ENCODE measurements at regions of chr7 and their contacts with region 1.

Region 1: DNA sequence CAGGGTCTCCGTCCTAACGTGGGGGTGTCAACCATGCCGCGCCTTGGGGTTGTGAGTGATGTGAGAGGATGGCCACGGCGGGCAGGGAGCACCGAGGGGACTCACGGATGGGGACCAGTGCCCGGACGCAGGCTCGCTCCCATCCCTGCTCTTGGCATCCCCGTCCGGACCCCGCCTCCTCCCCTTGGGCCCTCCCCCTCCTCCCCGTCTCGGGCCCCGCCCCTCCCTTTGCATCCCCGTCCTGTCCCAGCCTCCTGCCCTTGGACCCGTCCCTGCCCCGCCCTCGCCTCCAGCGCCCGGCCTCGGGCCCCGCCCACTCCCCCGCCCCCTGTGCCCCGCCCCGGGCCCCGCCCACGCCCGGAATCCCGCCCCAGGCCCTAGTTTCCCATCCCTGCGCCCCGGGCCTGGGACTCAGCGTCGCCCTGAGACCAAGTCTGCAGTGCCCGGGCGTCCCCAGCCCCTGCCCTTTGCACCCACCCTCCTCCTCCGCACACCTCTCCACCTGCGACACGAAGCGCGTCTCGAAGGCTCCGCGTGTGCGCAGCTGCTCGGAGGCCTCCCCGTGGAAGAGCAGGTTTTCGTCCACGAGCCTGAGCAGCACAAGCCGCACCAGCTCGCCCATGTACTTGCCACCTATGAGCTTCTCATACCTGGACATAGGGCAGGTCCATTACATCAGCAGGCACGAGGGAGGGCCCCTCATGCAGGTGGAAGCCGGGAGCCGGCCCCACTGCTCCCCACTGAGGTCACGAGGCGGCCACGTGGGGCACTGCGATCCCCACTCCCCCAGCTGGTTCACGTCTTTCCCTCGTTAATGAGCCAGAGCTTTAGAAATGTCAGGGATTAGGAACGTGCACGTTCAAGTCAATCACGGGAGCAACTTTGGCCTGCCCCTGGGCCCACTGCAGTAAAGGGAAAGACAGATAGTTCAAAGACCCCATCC is 5.1 kb upstream of the MYL7 start:
- DNase-seq: peak; percentile 55
- ATAC-seq: peak; percentile 85
- H3K4me3 Mint-ChIP-seq: peak overlapping the region; percentile 78
- H3K27ac Mint-ChIP-seq: no peak overlapping the region
- H3K4me1 Mint-ChIP-seq: peaks cover 18% of the 10 kb centered on the region
- H3K27me3 Mint-ChIP-seq: no peaks in the 10 kb centered on the region
- CTCF ChIP-seq: no peak

Region 2: DNA sequence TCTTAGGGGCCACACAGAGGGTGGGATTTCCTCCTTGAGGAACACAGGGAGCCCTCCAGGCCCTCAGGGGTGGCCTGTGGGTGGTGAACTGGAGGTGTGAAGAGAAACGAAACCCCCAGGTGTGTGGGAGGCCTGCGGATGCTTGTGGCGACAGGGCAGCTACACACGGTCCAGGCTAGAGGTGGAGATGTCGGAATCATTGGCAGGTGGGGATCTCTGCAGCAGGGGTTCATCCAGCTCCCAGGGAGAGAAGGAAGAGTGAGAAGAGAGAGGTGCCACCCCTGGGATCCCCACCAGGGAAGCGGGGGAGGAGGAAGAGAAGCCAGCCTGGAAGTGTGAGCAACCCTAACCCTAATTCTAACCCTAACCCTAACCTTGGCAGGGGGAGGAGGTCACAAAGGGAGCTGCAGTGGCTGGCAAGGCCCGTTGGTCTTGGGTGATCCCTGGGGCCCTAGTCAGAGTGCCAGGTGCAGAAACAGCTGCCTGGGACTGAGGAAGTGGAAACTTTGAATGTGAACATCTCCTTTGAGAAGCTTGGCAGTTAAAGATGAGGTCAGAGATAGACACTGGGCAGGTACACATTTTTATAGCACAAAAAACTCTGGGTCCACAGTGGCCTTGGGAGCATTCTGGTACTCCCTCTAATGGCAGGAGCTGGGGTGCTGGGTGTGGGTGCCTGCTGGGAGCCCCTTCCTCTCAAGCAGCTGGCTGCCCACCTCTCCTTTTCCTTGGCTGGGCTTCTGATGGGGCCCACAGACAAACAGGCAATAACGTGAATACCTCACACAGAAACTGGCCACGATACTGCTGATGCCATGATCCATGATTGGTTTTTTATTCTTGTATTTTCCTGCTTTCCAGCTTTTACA is 48.9 kb before region 1 on chr7:
- CTCF ChIA-PET with region 1: no interaction called
- POLR2A ChIA-PET with region 1: interaction called, 4 read pairs
- intact Hi-C with region 1: loop called (anchors 2 kb)
- DNase-seq: peak; percentile 53
- ATAC-seq: peak; percentile 89
- H3K4me3 Mint-ChIP-seq: peak overlapping the region; percentile 15
- H3K27ac Mint-ChIP-seq: peak overlapping the region; percentile 91
- H3K4me1 Mint-ChIP-seq: peaks cover 79% of the 10 kb centered on the region
- H3K27me3 Mint-ChIP-seq: no peaks in the 10 kb centered on the region
- CTCF ChIP-seq: no peak

Region 3: DNA sequence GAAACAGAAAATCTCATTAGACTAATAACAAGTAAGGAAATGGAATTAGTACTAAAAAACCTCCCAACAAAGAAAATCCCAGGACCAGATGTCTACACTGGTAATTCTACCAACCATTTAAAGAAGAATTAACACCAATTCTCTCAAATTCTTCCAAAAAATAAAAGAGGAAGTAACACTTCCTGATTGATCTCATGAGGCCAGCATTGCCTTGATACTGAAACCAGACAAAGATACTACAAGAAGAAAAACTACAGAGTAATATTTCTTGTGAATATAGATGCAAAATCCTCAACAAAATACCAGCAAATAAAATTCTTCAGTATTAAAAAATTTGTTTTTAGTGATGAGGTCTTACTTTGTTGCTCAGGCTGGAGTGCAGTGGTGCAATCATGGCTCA is 21.7 kb after region 1 on chr7:
- CTCF ChIA-PET with region 1: no interaction called
- POLR2A ChIA-PET with region 1: interaction called, 3 read pairs
- intact Hi-C with region 1: loop called (anchors 2 kb)
- DNase-seq: no peak
- ATAC-seq: peak; percentile 61
- H3K4me3 Mint-ChIP-seq: no peak overlapping the region
- H3K27ac Mint-ChIP-seq: peak overlapping the region; percentile 3
- H3K4me1 Mint-ChIP-seq: peaks cover 15% of the 10 kb centered on the region
- H3K27me3 Mint-ChIP-seq: no peaks in the 10 kb centered on the region
- CTCF ChIP-seq: no peak